ENCODE measurements at regions of chr7 and their contacts with region 1.

Region 1: DNA sequence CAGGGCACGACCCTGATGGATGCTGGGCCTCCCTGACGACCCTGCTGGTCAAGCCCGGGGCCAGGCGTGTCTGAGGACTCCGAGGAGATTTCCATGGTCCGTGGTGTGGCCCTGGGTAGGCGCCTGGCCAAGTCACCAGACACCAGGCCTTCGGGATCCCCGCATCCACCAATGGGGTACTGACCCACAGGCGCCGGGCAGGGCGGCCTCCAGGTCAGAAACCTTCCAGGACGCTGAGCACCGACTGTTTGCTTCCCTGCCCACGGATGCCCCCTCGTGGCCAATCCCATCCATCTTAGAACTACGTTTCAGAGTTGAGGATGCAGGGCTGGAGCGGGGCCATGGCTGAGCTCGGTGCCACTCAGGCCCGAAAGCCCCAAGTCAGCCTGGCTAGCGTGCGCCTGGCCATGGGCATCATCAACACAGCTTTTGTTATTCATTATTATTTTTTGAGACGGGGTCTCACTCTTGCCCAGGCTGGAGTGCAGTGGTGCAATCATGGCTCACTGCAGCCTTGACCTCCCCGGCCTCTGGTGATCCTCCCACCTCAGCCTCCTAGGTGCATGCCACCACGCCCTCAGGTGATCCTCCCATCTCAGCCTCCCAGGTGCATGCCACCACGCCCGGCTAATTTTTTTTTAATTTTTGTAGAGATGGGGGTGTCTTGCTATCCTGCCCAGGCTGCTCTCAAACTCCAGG is 7.1 kb upstream of the AMZ1 start:
- DNase-seq: peak in 1 of 2 donors; percentile 87
- H3K4me3 ChIP-seq: no peak overlapping the region
- H3K27ac ChIP-seq: no peak overlapping the region
- H3K4me1 ChIP-seq: no peaks in the 10 kb centered on the region
- H3K27me3 ChIP-seq: no peaks in the 10 kb centered on the region
- CTCF ChIP-seq: peak; percentile 64 to 79 (median 75)

Region 2: DNA sequence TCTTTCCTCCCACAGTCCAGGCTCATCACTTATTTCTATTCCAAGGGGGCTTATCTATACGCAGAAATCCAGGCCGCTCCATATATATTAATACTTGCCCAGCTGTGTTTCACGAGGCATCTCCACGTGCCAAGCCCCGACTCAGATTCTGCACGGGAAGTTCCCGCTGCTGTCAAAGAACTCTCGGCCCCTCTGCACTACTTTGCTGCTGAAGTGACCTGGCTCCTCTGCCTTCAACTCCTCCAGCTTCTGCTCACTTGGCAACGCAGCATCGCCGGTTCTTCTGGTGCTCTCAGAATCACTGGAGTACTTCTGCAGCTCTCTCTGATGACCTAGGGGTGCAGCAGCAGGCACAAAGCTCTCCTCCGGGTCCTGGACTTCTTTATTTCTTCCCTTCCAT is 287.2 kb before region 1 on chr7:
- intact Hi-C with region 1: no loop called
- DNase-seq: no peak
- H3K4me3 ChIP-seq: no peak overlapping the region
- H3K27ac ChIP-seq: no peak overlapping the region
- H3K4me1 ChIP-seq: no peaks in the 10 kb centered on the region
- H3K27me3 ChIP-seq: no peaks in the 10 kb centered on the region
- CTCF ChIP-seq: no peak

Region 3: DNA sequence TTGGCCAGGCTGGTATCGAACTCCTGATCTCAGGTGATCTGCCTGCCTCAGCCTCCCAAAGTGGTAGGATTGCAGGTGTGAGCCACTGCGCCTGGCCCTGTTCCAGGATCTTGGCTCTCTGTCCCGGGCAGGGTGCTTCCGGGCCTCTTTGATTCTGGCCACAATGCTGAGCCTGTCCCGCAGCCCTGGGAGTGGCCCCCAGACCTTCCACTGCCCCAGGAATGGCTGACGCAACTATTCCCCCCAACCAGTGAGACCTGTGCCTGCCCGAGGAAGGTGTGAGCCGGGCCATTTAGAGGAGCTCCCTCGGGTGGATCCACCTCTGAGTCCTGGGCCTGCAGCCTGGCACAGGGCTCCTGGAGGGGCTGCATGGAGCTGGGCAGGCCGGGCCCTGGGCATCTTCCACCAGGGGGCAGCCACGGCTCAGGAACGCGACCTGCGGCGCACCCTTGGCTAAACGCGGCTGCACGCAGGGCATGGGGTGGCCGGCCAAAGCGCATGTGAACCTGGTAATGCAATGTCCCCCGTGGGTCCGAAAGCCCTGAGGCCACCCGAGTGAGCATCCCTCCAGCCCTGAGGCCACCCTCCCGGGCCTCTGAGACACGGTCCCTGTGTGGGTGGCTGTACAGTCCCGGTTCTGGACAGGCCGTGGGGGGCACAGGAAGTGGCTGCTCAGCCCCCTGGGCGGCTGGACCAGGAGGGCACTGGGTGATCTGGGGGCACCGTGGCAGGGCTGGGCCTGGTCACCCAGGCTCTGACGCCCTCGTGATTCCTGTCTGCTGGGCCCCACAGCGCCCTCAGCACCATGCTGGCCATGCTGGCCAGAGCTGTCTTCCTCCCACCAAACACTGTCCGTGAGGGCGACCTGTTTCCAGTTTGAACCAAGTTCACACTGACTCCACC is 229.5 kb before region 1 on chr7:
- intact Hi-C with region 1: loop called (anchors 1 kb)
- DNase-seq: peak in 1 of 2 donors; percentile 88
- H3K4me3 ChIP-seq: peak overlapping the region; percentile 37 to 66
- H3K27ac ChIP-seq: no peak overlapping the region
- H3K4me1 ChIP-seq: peaks cover 4 to 6% of the 10 kb centered on the region in 2 donors
- H3K27me3 ChIP-seq: no peaks in the 10 kb centered on the region
- CTCF ChIP-seq: peak; percentile 79 to 88 (median 84)

Region 4: GRCh38 chr7:2567679-2568278 is 113.2 kb before region 1 on chr7:
- intact Hi-C with region 1: loop called (anchors 1 kb)
- DNase-seq: no peak
- H3K4me3 ChIP-seq: no peak overlapping the region
- H3K27ac ChIP-seq: no peak overlapping the region
- H3K4me1 ChIP-seq: no peaks in the 10 kb centered on the region
- H3K27me3 ChIP-seq: no peaks in the 10 kb centered on the region
- CTCF ChIP-seq: peak; percentile 36 to 57 (median 38)

Region 5: GRCh38 chr7:2800931-2801688 is 120.2 kb after region 1 on chr7:
- intact Hi-C with region 1: no loop called
- DNase-seq: no peak
- H3K4me3 ChIP-seq: peak overlapping the region in 1 of 2 donors; percentile 38
- H3K27ac ChIP-seq: peak overlapping the region; percentile 55 to 74
- H3K4me1 ChIP-seq: peaks cover 0 to 26% of the 10 kb centered on the region in 2 donors
- H3K27me3 ChIP-seq: no peaks in the 10 kb centered on the region
- CTCF ChIP-seq: no peak